ENCODE measurements at regions of chr1 and their contacts with region 1.

Region 1: DNA sequence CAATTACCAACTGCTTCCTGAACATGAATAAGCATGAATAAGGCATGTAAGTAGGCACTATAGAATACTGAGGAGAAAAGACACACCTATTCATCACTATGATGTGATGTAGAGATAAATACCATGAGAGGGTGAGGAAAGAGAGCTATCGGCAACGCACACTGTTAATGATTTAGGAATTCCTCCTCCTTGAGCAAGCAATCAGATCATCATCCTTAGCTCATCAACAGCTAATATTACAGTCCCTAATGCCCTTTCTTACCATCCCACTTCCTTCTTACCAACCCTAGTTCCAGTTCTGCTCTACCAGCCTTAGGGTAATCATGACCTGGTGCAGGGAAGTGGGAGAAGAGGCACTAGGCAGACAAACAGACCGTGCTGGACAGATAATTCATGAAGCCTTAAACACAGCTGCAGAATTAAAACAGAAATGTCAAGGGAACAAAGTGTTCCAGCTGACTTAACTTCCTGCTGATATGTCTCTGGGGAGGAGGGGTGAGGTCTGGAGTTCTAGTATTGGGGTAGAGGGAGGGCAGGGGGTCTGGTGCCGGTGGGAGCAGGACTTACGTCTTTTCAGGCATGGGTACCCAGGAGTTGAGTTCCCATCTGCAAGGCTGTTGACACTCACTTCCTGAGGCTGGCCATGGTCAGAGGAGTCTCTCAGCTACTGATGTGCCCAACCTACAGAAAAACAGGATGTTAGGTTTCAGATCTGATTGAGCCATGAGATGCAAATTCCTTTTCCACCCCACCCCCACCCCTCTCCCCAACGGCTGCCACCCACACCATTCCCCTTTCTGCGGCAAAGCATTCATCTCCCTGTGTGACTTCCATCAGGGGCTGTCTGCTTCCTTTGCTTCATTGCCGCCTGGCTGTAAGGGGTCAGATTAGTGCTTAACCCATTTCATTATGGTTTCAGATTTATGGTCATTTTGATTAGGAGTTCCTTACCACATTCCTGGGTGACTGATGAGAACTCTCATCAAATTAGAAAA is 12.6 kb upstream of the RCSD1 start:
- DNase-seq: peak; percentile 62
- ATAC-seq: peak; percentile 89
- H3K4me3 Mint-ChIP-seq: peak overlapping the region; percentile 77
- H3K27ac Mint-ChIP-seq: peak overlapping the region; percentile 94
- H3K4me1 Mint-ChIP-seq: peaks cover 92% of the 10 kb centered on the region
- H3K27me3 Mint-ChIP-seq: no peaks in the 10 kb centered on the region
- CTCF ChIP-seq: no peak

Region 2: DNA sequence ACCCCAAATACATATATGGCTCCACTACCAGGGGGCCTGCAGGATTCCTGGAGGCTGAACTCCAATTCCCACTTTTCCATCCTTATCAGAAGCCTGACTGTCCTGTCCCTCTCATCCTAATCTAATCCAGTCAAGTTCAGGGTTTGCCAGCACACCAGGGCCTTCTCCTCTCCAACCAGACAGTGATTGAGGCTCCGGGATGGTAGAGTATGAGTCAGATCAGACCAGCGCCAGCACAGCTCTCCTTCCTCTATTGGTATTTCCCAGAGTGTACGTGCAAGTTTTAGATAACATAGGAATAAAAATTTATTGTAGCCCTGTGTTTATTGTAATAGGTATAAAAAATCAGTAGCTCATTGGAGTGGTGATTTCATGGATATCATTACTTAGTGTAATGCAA is 11.9 kb before region 1 on chr1:
- CTCF ChIA-PET with region 1: interaction called, 78 read pairs
- POLR2A ChIA-PET with region 1: interaction called, 123 read pairs
- intact Hi-C with region 1: loop called (anchors 1 kb)
- DNase-seq: no peak
- ATAC-seq: no peak
- H3K4me3 Mint-ChIP-seq: no peak overlapping the region
- H3K27ac Mint-ChIP-seq: peak overlapping the region; percentile 21
- H3K4me1 Mint-ChIP-seq: peaks cover 36% of the 10 kb centered on the region
- H3K27me3 Mint-ChIP-seq: no peaks in the 10 kb centered on the region
- CTCF ChIP-seq: no peak

Region 3: GRCh38 chr1:167635156-167635648 is 17.8 kb after region 1 on chr1:
- CTCF ChIA-PET with region 1: interaction called, 14 read pairs
- POLR2A ChIA-PET with region 1: interaction called, 493 read pairs
- intact Hi-C with region 1: no loop called
- DNase-seq: no peak
- ATAC-seq: no peak
- H3K4me3 Mint-ChIP-seq: no peak overlapping the region
- H3K27ac Mint-ChIP-seq: peak overlapping the region; percentile 77
- H3K4me1 Mint-ChIP-seq: peaks cover 89% of the 10 kb centered on the region
- H3K27me3 Mint-ChIP-seq: no peaks in the 10 kb centered on the region
- CTCF ChIP-seq: no peak

Region 4: GRCh38 chr1:167650269-167651160 is 33.1 kb after region 1 on chr1:
- CTCF ChIA-PET with region 1: no interaction called
- POLR2A ChIA-PET with region 1: interaction called, 14 read pairs
- intact Hi-C with region 1: loop called (anchors 1 kb)
- DNase-seq: no peak
- ATAC-seq: peak; percentile 68
- H3K4me3 Mint-ChIP-seq: peak overlapping the region; percentile 73
- H3K27ac Mint-ChIP-seq: peak overlapping the region; percentile 93
- H3K4me1 Mint-ChIP-seq: peaks cover 94% of the 10 kb centered on the region
- H3K27me3 Mint-ChIP-seq: no peaks in the 10 kb centered on the region
- CTCF ChIP-seq: no peak

Region 5: GRCh38 chr1:167669209-167670124 is 52.0 kb after region 1 on chr1:
- CTCF ChIA-PET with region 1: no interaction called
- POLR2A ChIA-PET with region 1: interaction called, 16 read pairs
- intact Hi-C with region 1: loop called (anchors 1 kb)
- DNase-seq: no peak
- ATAC-seq: peak; percentile 43
- H3K4me3 Mint-ChIP-seq: peak overlapping the region; percentile 49
- H3K27ac Mint-ChIP-seq: peak overlapping the region; percentile 77
- H3K4me1 Mint-ChIP-seq: peaks cover 99% of the 10 kb centered on the region
- H3K27me3 Mint-ChIP-seq: no peaks in the 10 kb centered on the region
- CTCF ChIP-seq: no peak

Region 6: DNA sequence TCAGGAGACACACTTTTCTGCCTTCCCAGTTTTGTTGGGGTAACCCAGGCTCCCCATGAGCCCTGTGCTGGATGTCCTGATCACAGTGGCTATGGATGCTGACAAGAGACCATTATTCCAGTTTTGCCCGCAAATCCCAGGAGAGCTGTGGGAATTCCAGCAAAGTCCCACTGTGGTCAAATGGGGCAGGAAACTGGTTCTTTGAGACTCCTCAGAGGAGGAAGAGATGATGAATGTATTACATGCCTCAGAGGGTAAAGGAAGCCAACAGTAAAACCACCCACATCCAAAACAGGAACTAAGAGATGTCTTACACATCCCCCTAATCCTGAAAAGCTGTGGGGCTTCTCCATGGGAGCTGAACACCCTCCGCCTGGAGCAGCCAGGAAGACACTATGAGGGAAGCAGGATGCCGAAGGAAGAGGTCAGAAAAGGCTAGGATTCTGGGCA is 91.5 kb after region 1 on chr1:
- CTCF ChIA-PET with region 1: no interaction called
- POLR2A ChIA-PET with region 1: interaction called, 14 read pairs
- intact Hi-C with region 1: loop called (anchors 1 kb)
- DNase-seq: peak; percentile 53
- ATAC-seq: peak; percentile 72
- H3K4me3 Mint-ChIP-seq: peak overlapping the region; percentile 77
- H3K27ac Mint-ChIP-seq: peak overlapping the region; percentile 89
- H3K4me1 Mint-ChIP-seq: peaks cover 84% of the 10 kb centered on the region
- H3K27me3 Mint-ChIP-seq: no peaks in the 10 kb centered on the region
- CTCF ChIP-seq: no peak

Region 7: DNA sequence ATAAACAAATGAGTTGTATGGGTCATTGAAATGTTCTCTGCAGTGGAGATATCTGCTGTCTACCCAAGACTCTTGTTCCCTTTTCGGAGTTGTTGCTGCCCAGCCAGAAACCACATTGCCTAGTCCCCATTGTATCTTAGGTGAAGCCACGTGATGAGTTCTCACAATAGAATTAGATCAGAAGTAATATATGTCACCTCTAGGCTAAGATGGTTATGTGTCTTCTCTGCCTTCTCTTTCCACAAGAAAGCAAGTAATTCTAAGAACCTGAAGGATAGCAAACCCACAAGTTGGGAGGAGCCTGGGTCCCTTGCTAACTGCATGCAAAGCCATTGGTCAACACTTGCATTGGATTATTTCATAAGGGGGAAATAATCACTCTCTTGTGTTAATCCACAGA is 219.9 kb after region 1 on chr1:
- CTCF ChIA-PET with region 1: no interaction called
- POLR2A ChIA-PET with region 1: no interaction called
- intact Hi-C with region 1: no loop called
- DNase-seq: no peak
- ATAC-seq: no peak
- H3K4me3 Mint-ChIP-seq: no peak overlapping the region
- H3K27ac Mint-ChIP-seq: no peak overlapping the region
- H3K4me1 Mint-ChIP-seq: no peaks in the 10 kb centered on the region
- H3K27me3 Mint-ChIP-seq: peaks cover 10% of the 10 kb centered on the region
- CTCF ChIP-seq: no peak

Measured in activated B cell treated with CpG ODN at 0.5 μM for 24 hours (primary cell).